ENCODE measurements at regions of chrX and their contacts with region 1.

Region 1: DNA sequence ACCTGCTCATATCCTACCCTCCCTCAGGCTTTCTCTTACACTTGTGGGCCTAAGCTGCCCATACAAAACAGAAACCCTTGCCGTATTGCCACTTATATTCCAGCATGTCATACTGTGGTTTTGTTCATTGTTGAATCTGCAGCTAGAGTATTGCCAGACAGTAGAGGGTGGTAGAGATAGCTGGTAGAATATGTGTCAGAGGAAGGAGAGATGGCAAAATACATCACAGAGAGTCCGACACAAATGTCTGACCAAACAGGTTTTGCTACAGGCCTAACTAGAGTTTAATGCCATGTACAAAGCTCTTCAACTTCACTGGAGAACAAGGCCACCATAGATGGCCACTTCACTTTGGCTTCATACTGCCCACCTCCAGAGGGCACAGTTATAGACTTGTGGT is 160.1 kb downstream of the EFHC2 start:
- DNase-seq: peak; percentile 48
- ATAC-seq: no peak; the same call in 1 of the 2 replicates
- H3K4me3 ChIP-seq: no peak overlapping the region
- H3K27ac ChIP-seq: no peak overlapping the region
- H3K4me1 ChIP-seq: peaks cover 13% of the 10 kb centered on the region
- H3K27me3 ChIP-seq: no peaks in the 10 kb centered on the region
- CTCF ChIP-seq: peak; percentile 53

Region 2: GRCh38 chrX:44071847-44072545 is 111.3 kb before region 1 on chrX:
- CTCF ChIA-PET with region 1: no interaction called
- POLR2A ChIA-PET with region 1: interaction called, 11 read pairs
- intact Hi-C with region 1: no loop called
- DNase-seq: peak; percentile 92
- ATAC-seq: peak; percentile 93
- H3K4me3 ChIP-seq: peak overlapping the region; percentile 15; the same call in 1 of the 2 replicates
- H3K27ac ChIP-seq: peak overlapping the region; percentile 79
- H3K4me1 ChIP-seq: peaks cover 20% of the 10 kb centered on the region
- H3K27me3 ChIP-seq: no peaks in the 10 kb centered on the region
- CTCF ChIP-seq: no peak

Region 3: DNA sequence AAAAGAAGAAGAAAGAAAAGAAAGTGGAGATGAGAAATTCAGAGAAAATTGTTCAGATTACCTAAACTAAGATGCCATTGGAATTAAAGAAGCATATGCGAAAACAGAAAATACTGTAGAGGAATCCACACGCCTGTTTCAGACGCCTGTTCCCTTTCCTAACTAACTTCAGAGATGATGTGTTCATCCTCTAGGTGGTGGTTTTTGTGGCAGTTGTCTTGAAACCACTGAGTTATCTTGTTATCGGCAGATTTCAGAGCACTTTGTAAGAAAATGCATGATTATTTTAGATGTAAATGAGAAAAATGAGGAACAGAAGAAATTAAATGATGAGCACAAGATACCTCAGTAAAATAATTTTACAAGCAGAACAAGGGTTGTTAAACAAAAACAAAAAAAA is 311.0 kb after region 1 on chrX:
- CTCF ChIA-PET with region 1: no interaction called
- POLR2A ChIA-PET with region 1: no interaction called
- intact Hi-C with region 1: no loop called
- DNase-seq: no peak
- ATAC-seq: no peak
- H3K4me3 ChIP-seq: no peak overlapping the region
- H3K27ac ChIP-seq: no peak overlapping the region
- H3K4me1 ChIP-seq: no peaks in the 10 kb centered on the region
- H3K27me3 ChIP-seq: no peaks in the 10 kb centered on the region
- CTCF ChIP-seq: no peak

Measured in PC-3 (cell line).